Activated T-helper 1 cell treated with anti-CD3 and anti-CD28 coated beads, Interleukin-12 subunit alpha, Interleukin-12 subunit beta, Interleukin-2, Interleukin-4 antibody, amounts not matched to agents 30 ng/mL and 10 ng/mL and 1 ng/mL, durations not matched to agents 14 hours and 24 hours and 36 hours (primary cell): ENCODE measurements at regions of chr11 and their contacts with region 1.

Region 1: DNA sequence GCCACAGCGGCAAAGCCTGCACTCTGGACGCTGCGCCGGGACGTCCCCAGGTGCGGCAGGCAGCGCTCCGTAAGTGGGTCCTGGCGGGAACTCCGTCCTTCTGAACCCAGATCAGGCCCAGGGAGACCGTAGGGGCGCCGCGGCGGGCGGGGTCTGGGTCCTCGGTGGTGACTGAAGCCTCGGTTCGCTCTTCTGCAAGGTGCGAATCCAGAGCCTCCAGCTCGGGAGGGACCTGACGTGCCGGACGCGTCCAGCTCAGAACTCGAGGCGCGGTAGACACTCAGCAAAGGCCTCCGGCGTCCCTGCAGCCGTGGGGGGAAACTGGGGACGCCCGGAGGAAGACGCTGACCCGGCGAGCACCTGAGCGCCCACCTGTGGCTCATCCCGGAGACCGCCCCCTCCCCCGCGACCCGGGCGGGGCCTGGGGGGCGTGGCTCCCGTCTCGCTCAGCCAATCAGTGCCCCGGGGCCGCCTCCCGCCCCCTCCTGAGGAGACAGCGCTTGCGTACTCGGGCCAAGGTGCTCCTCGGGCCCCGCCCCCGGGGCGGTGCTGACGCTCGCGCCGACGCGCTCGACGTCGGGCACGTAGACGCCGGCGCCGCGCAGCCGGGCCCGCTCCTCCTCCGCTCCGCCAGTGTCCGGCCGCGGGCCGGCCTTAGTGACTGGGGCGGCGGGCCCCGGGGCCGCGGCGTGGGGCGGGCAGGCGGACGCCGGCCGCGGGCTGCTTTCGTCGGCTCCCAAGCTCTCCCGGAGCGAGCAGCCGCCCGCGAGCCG is at the start of gene PPFIA1:
- DNase-seq: peak; percentile 95
- H3K4me3 Mint-ChIP-seq: peak within 1 kb of the TSS; percentile 94
- H3K27ac Mint-ChIP-seq: peak within 1 kb of the TSS; percentile 89
- H3K4me1 Mint-ChIP-seq: peaks cover 52% of the 10 kb centered on the region
- H3K27me3 Mint-ChIP-seq: peaks cover 21% of the 10 kb centered on the region
- total RNA-seq, gene PPFIA1: 56.8 and 60.3 TPM in 2 replicates

Region 2: DNA sequence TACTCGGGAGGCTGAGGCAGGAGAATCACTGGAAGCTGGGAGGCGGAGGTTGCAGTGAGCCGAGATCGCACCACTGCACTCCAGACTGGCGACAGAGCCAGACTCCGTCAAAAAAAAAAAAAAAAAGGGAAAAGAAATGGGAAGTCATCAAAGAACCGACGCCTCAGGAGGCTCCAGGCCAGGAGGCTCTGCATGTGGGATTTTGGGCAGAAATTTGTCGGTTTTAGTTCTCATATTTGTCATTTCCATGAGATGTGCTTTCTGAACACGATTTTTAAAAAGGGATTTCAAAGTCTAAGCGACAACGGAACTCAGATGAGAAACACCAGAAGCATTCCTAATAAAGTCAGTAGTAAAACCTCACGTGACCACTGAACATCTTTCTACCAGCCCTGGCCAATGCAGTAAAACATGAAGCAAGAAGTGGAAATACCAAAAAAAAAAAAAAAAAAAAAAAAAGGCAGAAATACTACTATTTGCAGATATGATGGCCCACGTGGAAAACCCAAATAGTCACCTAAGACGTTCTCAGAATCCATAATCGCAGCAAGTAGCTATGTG is 594.4 kb before region 1 on chr11:
- intact Hi-C with region 1: loop called (anchors 5 kb)
- DNase-seq: no peak
- H3K4me3 Mint-ChIP-seq: peak overlapping the region; percentile 97
- H3K27ac Mint-ChIP-seq: no peak overlapping the region
- H3K4me1 Mint-ChIP-seq: peaks cover 20% of the 10 kb centered on the region
- H3K27me3 Mint-ChIP-seq: peaks cover 7% of the 10 kb centered on the region

Region 3: GRCh38 chr11:70364745-70365543 is 94.7 kb after region 1 on chr11:
- intact Hi-C with region 1: loop called (anchors 1 kb)
- DNase-seq: peak; percentile 60
- H3K4me3 Mint-ChIP-seq: peak overlapping the region; percentile 75
- H3K27ac Mint-ChIP-seq: peak overlapping the region; percentile 97
- H3K4me1 Mint-ChIP-seq: peaks cover 28% of the 10 kb centered on the region
- H3K27me3 Mint-ChIP-seq: no peaks in the 10 kb centered on the region

Region 4: DNA sequence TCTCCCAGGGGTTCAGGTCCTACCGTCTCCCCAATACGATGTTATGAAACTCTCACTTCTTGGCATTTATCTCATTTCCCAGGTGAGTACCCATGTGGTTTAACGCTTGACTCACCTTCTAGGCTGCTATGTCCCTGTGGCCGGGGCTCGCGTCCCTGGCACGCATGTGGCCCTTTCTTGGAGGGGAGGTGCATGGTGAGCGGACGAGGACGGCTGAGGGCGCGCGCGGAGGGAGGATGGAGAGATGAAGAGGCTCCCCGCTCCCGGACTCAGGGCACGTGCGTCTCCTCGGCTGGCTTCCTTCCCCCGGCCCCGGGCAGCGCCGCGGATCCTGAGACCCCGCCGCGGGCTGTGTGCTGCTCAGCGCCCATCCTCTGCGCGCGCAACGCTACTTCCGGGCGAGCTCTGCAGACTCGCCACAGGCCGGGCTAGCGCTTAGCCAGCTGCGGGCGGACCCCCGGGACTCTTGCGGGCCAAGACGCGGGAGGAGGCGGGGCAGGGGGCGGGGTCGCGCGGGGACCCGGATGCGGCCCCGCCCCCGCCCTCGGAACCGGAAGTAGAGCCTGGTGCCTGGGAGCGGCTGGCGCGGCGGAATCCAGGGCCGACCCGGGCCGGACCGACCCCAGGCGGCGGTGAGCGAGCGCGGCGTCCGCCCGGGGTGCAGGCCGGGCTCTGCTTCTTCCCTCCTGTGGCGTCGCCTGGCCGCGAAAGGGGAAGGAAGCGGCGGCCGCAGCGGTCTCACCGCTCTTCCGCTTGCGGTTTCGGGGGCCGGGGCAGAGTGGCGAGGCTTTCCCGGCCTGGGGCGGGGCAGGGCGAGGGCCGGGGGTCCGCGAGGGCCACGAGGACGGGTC is 127.9 kb after region 1 on chr11 and contains the start of gene CTTN:
- intact Hi-C with region 1: loop called (anchors 1 kb)
- DNase-seq: peak; percentile 42
- H3K4me3 Mint-ChIP-seq: peak within 1 kb of the TSS; percentile 87
- H3K27ac Mint-ChIP-seq: peak within 1 kb of the TSS; percentile 77
- H3K4me1 Mint-ChIP-seq: peaks cover 24% of the 10 kb centered on the region
- H3K27me3 Mint-ChIP-seq: peaks cover 58% of the 10 kb centered on the region
- total RNA-seq, gene CTTN: 51.4 and 53.7 TPM in 2 replicates

Region 5: GRCh38 chr11:71448257-71449171 is 1178.2 kb after region 1 on chr11 and contains the start of gene DHCR7:
- intact Hi-C with region 1: loop called (anchors 10 kb)
- DNase-seq: peak; percentile 96
- H3K4me3 Mint-ChIP-seq: peak within 1 kb of the TSS; percentile 92
- H3K27ac Mint-ChIP-seq: peak within 1 kb of the TSS; percentile 93
- H3K4me1 Mint-ChIP-seq: peaks cover 62% of the 10 kb centered on the region
- H3K27me3 Mint-ChIP-seq: no peaks in the 10 kb centered on the region
- total RNA-seq, gene DHCR7: 100 and 106 TPM in 2 replicates